ENCODE measurements at regions of chr3 and their contacts with region 1.

Region 1: DNA sequence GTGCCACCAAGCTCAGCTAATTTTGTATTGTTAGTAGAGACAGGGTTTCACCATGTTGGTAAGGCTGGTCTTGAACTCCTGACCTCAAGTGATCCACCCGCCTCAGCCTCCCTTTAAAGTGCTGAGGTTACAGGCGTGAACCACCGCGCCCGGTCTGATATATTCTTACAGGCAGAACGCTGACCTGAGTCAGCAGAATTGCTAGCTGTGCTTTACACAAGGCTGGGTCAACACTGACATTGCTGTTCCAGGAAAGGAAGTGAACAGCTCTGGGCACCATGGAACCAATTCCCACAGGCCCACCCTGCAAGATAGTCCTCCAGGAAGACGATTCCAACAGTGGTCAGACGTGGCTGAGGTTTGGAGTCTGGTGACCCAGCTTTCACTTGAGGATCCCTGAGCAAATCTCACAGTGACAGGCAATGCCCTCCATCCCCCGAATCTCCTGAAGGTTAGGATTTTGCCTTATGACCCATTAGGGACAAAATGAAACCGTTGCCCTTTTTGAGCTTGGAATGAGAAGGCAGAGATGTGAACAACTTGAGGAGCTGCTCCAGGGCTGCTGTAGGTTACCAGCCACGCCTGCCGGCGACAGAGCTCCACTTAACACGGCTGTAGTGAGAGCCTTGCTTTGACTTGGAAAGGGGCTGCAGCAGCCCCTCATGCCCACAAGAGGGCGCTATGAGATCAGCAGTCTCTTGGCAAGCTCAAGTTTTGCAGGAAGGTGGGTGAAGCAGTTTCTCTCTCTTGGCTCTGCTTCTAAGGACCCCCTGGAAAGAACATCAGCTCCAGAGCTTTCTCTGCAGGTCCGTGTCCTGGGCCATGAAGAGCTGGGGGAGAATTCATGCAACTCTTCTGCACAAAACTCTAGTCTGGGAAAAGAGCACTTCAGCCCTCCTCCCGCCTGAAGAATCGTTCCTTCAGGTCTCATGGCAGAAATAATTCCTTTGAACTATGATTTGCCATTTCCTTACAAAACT is 74.1 kb downstream of the SENP2 start:
- DNase-seq: peak; percentile 64 to 72 (median 67)
- H3K4me3 ChIP-seq: peak overlapping the region in 1 of 3 experiments; percentile 33
- H3K4me3 Mint-ChIP-seq: peak overlapping the region; percentile 54 to 60
- H3K27ac ChIP-seq: no peak overlapping the region
- H3K27ac Mint-ChIP-seq: peak overlapping the region in 1 of 7 donors; percentile 28
- H3K4me1 ChIP-seq: peaks cover 0 to 4% of the 10 kb centered on the region in 2 donors
- H3K4me1 Mint-ChIP-seq: peaks cover 9% of the 10 kb centered on the region
- H3K27me3 ChIP-seq: no peaks in the 10 kb centered on the region
- H3K27me3 Mint-ChIP-seq: peaks cover 0 to 3% (median 1%) of the 10 kb centered on the region in 3 donors
- CTCF ChIP-seq: peak; percentile 98

Region 2: GRCh38 chr3:185767002-185767688 is 106.9 kb after region 1 on chr3:
- intact Hi-C with region 1: loop called (anchors 5 kb)
- DNase-seq: peak in 1 of 3 donors; percentile 11
- H3K4me3 ChIP-seq: no peak overlapping the region
- H3K4me3 Mint-ChIP-seq: peak overlapping the region in 1 of 2 donors; percentile 26
- H3K27ac ChIP-seq: peak overlapping the region in 1 of 2 donors; percentile 34
- H3K27ac Mint-ChIP-seq: peak overlapping the region; percentile 8 to 82 (median 58)
- H3K4me1 ChIP-seq: peaks cover 28 to 31% of the 10 kb centered on the region in 2 donors
- H3K4me1 Mint-ChIP-seq: peaks cover 33% of the 10 kb centered on the region
- H3K27me3 ChIP-seq: no peaks in the 10 kb centered on the region
- H3K27me3 Mint-ChIP-seq: peaks cover 0 to 1% (median 0%) of the 10 kb centered on the region in 3 donors
- CTCF ChIP-seq: no peak

Region 3: DNA sequence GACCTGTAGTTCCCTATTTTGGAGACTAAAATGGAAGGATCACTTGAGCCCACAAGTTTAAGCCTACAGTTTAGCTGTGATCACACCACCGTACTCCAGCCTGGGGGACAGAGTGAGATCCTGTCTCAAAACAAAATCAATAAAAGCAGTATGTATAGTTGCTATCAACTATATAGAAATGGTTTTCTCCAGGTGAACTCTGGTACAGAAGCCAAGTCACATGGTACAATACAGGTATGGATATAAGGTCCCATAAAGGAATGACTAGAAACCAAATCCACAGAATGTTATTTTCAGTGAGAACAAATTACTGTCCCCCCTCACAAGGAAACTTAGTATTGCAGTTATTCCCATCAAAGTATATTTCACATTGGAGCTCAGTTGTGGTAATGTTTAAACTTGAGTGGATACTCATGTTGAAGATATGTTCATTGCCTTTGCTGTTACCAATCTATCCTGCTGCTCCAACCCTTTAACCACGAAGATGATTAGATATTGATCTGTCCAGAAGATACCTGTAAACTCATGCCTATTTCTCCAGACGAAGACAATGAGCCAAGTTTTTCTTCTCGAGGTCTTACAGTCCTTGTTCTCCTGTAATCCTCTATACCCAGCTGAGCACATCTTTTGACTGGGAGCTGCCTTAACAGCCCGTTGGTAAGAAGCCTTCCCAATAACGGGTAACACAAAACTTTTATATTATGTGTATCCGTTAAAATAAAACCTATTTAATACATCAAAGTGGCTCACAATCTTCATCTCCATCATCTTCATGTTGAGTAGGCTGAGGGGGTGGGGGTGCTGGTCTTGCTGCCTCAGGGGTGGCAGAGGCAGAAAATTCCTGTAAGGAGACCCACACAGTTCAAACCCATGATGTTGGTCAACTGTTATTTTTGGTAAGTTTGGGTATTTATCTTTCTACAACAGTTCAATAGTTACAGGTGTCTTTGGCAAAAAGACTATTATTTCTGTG is 253.0 kb after region 1 on chr3:
- intact Hi-C with region 1: loop called in 1 of 2 experiments (anchors 10 kb)
- DNase-seq: peak in 1 of 3 donors; percentile 16
- H3K4me3 ChIP-seq: no peak overlapping the region
- H3K4me3 Mint-ChIP-seq: no peak overlapping the region
- H3K27ac ChIP-seq: no peak overlapping the region
- H3K27ac Mint-ChIP-seq: peak overlapping the region in 1 of 7 donors; percentile 5
- H3K4me1 ChIP-seq: no peaks in the 10 kb centered on the region
- H3K4me1 Mint-ChIP-seq: no peaks in the 10 kb centered on the region
- H3K27me3 ChIP-seq: no peaks in the 10 kb centered on the region
- H3K27me3 Mint-ChIP-seq: peaks cover 0 to 2% (median 0%) of the 10 kb centered on the region in 3 donors
- CTCF ChIP-seq: no peak